Activated T-helper 1 cell treated with anti-CD3 and anti-CD28 coated beads, Interleukin-12 subunit alpha, Interleukin-12 subunit beta, Interleukin-2, Interleukin-4 antibody, amounts not matched to agents 30 ng/mL and 10 ng/mL and 1 ng/mL, durations not matched to agents 14 hours and 24 hours and 36 hours (primary cell): ENCODE measurements at regions of chr9 and their contacts with region 1.

Region 1: GRCh38 chr9:114662081-114662989 is 4.7 kb upstream of the TEX53 start:
- DNase-seq: peak; percentile 54
- H3K4me3 Mint-ChIP-seq: no peak overlapping the region
- H3K27ac Mint-ChIP-seq: no peak overlapping the region
- H3K4me1 Mint-ChIP-seq: peaks cover 16% of the 10 kb centered on the region
- H3K27me3 Mint-ChIP-seq: peaks cover 13% of the 10 kb centered on the region

Region 2: GRCh38 chr9:115524453-115525059 is 862.2 kb after region 1 on chr9:
- intact Hi-C with region 1: loop called (anchors 1 kb)
- DNase-seq: no peak
- H3K4me3 Mint-ChIP-seq: no peak overlapping the region
- H3K27ac Mint-ChIP-seq: no peak overlapping the region
- H3K4me1 Mint-ChIP-seq: no peaks in the 10 kb centered on the region
- H3K27me3 Mint-ChIP-seq: peaks cover 3% of the 10 kb centered on the region

Region 3: GRCh38 chr9:116572095-116572748 is 1909.9 kb after region 1 on chr9:
- intact Hi-C with region 1: loop called (anchors 10 kb)
- DNase-seq: no peak
- H3K4me3 Mint-ChIP-seq: no peak overlapping the region
- H3K27ac Mint-ChIP-seq: no peak overlapping the region
- H3K4me1 Mint-ChIP-seq: no peaks in the 10 kb centered on the region
- H3K27me3 Mint-ChIP-seq: no peaks in the 10 kb centered on the region